Activated CD8-positive, alpha-beta T cell treated with anti-CD3 and anti-CD28 coated beads, Interleukin-2, amount 10 ng/mL, durations not matched to agents 7 days and 5 days (primary cell): ENCODE measurements at regions of chr20 and their contacts with region 1.

Region 1: DNA sequence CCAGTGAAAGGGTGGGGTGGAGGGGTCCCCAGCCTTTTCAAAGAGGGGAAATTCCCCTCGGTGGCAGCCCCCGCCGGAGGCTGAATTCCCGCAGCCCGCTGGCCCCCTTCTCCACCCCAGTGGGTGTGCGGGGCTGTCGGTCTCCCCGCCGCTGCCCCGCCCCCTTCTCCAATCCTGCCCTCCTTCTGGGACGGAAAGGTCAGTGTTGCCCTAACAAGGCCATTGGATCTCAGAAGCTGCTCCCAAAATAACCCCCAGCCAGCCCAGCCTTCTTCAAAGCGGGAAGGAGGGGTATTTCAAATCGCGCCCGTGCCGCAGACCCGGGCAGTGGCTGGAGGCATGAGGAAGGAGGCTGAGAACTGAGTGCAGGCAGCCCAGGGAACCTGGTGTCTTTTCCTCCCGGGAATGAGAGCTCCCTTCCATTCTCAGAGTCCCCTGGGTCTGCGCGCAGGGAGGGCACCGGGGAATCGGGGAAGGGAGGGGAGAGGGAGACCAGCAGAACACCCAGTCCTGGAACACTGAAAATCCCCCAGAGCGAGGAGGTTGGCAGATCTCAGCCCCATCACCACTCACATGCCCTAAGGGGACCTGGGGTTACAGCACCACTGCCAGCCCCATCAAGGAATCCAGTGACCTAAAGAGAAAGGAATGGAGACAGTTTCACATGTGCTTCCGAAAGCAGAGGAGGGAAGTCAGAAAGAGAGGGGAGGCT is at the start of gene JPH2:
- DNase-seq: no peak
- ATAC-seq: no peak
- H3K4me3 Mint-ChIP-seq: peak within 1 kb of the TSS; percentile 48
- H3K27ac Mint-ChIP-seq: no peak within 1 kb of the TSS
- H3K4me1 Mint-ChIP-seq: peaks cover 17% of the 10 kb centered on the region
- H3K27me3 Mint-ChIP-seq: peaks cover 50% of the 10 kb centered on the region
- total RNA-seq, gene JPH2: 0.10 TPM in 1 of 2 experiments, not detected in the other

Region 2: GRCh38 chr20:43953919-43954592 is 233.2 kb before region 1 on chr20:
- CTCF ChIA-PET with region 1: no interaction called
- POLR2A ChIA-PET with region 1: no interaction called
- DNase-seq: no peak
- ATAC-seq: no peak
- H3K4me3 Mint-ChIP-seq: no peak overlapping the region
- H3K27ac Mint-ChIP-seq: no peak overlapping the region
- H3K4me1 Mint-ChIP-seq: peaks cover 73% of the 10 kb centered on the region
- H3K27me3 Mint-ChIP-seq: peaks cover 45% of the 10 kb centered on the region

Region 3: DNA sequence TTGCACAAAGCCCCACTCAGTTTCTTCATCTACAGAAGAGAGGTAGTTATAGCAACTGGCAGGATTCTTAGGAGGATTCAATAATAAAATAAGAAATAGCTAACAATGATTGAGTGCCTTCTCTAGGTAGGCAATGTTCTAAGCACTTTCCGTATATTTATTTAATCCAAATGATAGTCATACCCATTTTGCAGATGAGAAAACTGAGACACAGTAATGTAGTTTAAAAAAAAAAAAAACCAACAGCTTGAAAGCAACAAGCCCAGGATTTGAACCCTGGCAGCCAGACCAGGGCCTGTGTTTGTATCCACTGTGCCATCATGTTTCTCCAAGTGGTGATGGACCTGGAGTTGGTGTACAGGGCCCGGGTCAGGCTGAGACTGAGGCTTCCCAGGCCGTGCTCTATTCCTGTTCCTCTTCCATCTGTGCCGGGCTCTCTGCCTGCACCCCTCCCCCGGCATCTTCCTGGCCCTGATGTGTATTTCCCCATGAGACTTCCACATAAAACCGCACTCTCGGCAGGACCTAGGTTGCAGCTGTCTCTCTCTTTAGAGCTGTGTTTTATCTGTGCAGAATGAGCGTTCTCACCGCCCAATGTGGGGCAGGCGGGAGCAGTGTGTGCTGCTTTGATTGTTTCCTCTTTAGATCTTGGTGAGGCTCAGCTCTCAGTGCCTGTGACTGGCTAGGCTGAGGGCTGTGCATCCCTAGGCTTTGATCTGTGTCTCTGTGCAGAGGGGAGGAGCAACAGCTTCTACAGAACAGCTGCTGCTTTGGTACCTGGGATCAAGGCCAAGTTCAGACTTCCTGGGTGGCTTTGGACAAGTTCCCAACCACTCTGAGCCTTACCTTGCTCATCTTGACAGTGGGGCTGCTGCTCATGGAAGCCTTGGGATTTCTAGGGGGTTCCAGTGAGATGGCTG is 223.1 kb before region 1 on chr20:
- CTCF ChIA-PET with region 1: no interaction called
- POLR2A ChIA-PET with region 1: no interaction called
- DNase-seq: peak; percentile 42
- ATAC-seq: peak; percentile 79
- H3K4me3 Mint-ChIP-seq: no peak overlapping the region
- H3K27ac Mint-ChIP-seq: no peak overlapping the region
- H3K4me1 Mint-ChIP-seq: peaks cover 25% of the 10 kb centered on the region
- H3K27me3 Mint-ChIP-seq: peaks cover 36% of the 10 kb centered on the region

Region 4: GRCh38 chr20:44129911-44130718 is 57.1 kb before region 1 on chr20:
- CTCF ChIA-PET with region 1: interaction called, 19 read pairs
- POLR2A ChIA-PET with region 1: no interaction called
- DNase-seq: no peak
- ATAC-seq: no peak
- H3K4me3 Mint-ChIP-seq: no peak overlapping the region
- H3K27ac Mint-ChIP-seq: no peak overlapping the region
- H3K4me1 Mint-ChIP-seq: no peaks in the 10 kb centered on the region
- H3K27me3 Mint-ChIP-seq: peaks cover 6% of the 10 kb centered on the region

Region 5: DNA sequence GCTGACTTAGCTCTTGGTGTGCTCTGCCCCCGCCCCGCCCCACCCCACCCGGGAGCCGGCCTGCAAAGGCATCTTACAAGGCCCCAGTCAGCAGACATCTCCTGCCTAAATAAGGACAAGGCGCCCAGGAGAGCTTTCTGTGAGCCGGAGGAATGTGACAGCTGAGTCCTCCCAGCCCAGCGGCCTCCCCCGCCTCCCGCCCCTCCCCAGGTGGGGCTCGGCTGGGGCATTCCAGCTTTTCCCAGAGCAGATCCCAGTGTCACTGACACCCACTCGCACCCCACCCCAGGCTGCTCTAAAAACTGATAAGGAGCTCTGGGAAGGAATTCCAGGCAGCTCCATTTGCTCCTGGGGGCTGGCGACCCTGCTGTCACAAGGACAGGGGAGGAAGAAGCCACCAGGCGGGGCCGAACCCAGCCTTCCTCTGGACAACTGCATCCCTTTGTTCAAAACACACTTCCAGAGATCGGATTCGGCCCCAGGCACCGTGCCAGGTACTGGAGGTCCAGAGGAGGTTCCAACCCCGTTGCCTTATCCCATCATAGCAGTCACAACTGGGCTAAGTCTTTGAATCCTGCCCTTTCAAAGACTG is 49.9 kb before region 1 on chr20:
- CTCF ChIA-PET with region 1: interaction called, 19 read pairs
- POLR2A ChIA-PET with region 1: no interaction called
- DNase-seq: no peak
- ATAC-seq: no peak
- H3K4me3 Mint-ChIP-seq: no peak overlapping the region
- H3K27ac Mint-ChIP-seq: no peak overlapping the region
- H3K4me1 Mint-ChIP-seq: no peaks in the 10 kb centered on the region
- H3K27me3 Mint-ChIP-seq: peaks cover 11% of the 10 kb centered on the region